Panc1 (cell line): ENCODE measurements at regions of chr17 and their contacts with region 1.

Region 1: DNA sequence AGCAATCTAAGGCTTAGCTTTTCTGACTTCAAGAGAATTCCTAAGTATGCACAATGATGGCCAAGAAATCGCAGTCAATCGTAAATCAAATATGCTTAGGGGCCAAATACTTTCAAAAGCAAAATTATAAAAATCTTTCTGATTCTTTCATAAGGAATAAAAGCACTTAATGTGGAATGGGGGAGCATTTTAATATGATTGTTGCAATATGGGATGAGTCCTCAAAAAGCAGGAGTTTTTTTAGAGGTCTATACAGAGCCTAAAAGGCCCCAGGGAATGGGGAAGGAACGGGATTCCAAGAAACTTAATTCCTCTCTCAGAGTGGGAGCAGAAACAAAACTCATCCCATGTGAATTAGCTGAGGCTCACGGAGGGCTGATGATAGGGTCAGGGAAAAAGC is 14.7 kb upstream of the SLC39A11 start:
- DNase-seq: no peak
- ATAC-seq: no peak
- H3K4me3 ChIP-seq: no peak overlapping the region
- H3K27ac ChIP-seq: no peak overlapping the region
- H3K4me1 ChIP-seq: peaks cover 5% of the 10 kb centered on the region; the same call in 1 of the 2 replicates
- H3K27me3 ChIP-seq: no peaks in the 10 kb centered on the region
- CTCF ChIP-seq: no peak

Region 2: GRCh38 chr17:73045724-73046123 is 61.5 kb before region 1 on chr17:
- CTCF ChIA-PET with region 1: no interaction called
- POLR2A ChIA-PET with region 1: interaction called, 27 read pairs
- in situ Hi-C with region 1: no loop called
- intact Hi-C with region 1: no loop called
- DNase-seq: no peak
- ATAC-seq: no peak
- H3K4me3 ChIP-seq: no peak overlapping the region
- H3K27ac ChIP-seq: no peak overlapping the region
- H3K4me1 ChIP-seq: 0 out of 2 replicates have a peak, but pooled peaks cover 3% of the 10 kb centered on the region
- H3K27me3 ChIP-seq: no peaks in the 10 kb centered on the region
- CTCF ChIP-seq: no peak